HAP-1 (cell line): ENCODE measurements at regions of chr5 and their contacts with region 1.

Region 1: DNA sequence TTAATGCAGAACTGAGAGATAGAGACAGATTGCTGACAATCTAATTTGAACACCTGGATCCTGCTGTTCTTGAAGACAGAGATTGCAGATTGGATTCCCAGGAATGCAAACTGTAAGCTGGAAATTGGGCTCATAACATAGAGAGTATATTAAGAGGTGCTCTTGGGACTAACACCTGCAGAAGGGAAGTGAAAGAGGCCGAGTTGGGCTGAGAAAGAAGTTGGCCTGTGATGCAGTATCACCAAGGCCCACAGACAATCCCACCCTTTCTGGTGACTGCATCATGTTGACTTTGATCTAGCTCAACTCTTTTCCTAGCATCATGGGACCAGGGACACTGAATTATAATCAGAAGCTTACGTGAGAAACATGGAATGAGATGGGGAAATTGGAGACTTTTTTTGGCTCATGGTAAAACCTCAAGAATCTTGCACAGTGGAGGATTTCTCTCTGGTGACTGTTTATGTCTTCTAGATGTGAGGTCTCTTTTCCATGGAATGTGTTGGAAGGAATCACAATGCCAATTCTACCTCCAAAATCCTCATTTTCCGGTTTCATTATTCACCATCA is 36.5 kb upstream of the NUDT12 start:
- DNase-seq: no peak
- H3K4me3 ChIP-seq: no peak overlapping the region
- H3K4me1 ChIP-seq: no peaks in the 10 kb centered on the region
- H3K27me3 ChIP-seq: no peaks in the 10 kb centered on the region

Region 2: GRCh38 chr5:103690676-103691075 is 91.6 kb after region 1 on chr5:
- in situ Hi-C with region 1: no loop called
- DNase-seq: peak in 1 of 2 experiments; percentile 72
- H3K4me3 ChIP-seq: no peak overlapping the region
- H3K4me1 ChIP-seq: peaks cover 9% of the 10 kb centered on the region
- H3K27me3 ChIP-seq: peaks cover 5% of the 10 kb centered on the region; the same call in 1 of the 2 replicates

Region 3: GRCh38 chr5:104186100-104186499 is 587.0 kb after region 1 on chr5:
- in situ Hi-C with region 1: loop called (anchors 10 kb)
- DNase-seq: no peak
- H3K4me3 ChIP-seq: no peak overlapping the region
- H3K4me1 ChIP-seq: no peaks in the 10 kb centered on the region
- H3K27me3 ChIP-seq: no peaks in the 10 kb centered on the region